Tibial artery (tissue), 4 donors: ENCODE measurements at regions of chr17 and their contacts with region 1.

Region 1: GRCh38 chr17:29111816-29112499 is 68.2 kb downstream of the MYO18A start:
- DNase-seq: peak; percentile 43 to 76
- H3K4me3 ChIP-seq: no peak overlapping the region
- H3K27ac ChIP-seq: peak overlapping the region in 1 of 2 donors; percentile 13
- H3K4me1 ChIP-seq: peaks cover 0 to 24% (median 6%) of the 10 kb centered on the region in 4 donors
- H3K27me3 ChIP-seq: no peaks in the 10 kb centered on the region
- CTCF ChIP-seq: peak; percentile 60 to 87

Region 2: DNA sequence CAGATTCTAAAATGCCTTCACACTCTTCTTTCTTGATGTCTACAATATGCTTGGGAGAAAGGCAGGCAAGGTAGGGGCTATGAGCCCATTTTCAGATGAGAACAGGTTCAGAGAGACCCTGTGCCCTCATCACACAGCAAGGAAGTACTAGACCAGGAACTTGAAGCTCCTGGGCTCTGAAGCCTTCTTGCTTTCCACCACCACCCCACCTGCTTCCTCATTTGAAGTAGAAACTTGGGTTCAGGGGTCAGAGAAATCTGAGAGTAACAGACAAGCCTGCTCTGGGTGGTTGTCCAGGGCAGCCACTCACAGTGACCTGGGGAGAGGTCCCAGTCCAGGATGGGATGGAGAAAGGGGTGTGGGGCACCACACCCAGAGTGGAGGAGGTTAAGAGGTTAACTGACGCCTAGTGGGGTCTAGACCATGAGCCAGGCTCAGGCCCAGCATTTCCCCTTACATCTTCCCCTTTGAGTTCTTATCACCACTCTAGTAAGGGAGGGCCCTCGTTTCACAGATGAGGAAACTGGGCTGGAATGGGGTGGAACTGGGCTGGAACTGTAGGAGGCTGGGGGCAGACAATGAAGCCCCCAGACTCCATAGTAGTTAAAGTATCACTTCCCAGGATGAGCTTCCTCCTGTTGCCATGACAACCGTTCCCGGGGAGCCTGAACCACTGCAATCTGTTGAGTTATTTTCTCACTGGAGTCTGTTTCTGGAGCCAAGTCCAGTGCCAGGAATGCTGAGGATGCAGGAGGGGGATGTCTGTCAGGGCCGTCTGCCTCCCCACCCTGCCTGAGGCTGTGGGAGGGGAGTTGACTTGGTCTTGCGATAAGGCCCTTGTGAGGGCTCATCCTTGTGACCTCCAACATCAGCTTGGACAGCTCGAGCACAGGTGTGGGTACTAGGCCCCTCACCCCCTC is 144.5 kb before region 1 on chr17:
- intact Hi-C with region 1: loop called (anchors 2 kb)
- DNase-seq: no peak
- H3K4me3 ChIP-seq: no peak overlapping the region
- H3K27ac ChIP-seq: no peak overlapping the region
- H3K4me1 ChIP-seq: no peaks in the 10 kb centered on the region
- H3K27me3 ChIP-seq: peaks cover 0 to 43% of the 10 kb centered on the region in 2 donors
- CTCF ChIP-seq: no peak